ENCODE measurements at regions of chr7 and their contacts with region 1.

Region 1: DNA sequence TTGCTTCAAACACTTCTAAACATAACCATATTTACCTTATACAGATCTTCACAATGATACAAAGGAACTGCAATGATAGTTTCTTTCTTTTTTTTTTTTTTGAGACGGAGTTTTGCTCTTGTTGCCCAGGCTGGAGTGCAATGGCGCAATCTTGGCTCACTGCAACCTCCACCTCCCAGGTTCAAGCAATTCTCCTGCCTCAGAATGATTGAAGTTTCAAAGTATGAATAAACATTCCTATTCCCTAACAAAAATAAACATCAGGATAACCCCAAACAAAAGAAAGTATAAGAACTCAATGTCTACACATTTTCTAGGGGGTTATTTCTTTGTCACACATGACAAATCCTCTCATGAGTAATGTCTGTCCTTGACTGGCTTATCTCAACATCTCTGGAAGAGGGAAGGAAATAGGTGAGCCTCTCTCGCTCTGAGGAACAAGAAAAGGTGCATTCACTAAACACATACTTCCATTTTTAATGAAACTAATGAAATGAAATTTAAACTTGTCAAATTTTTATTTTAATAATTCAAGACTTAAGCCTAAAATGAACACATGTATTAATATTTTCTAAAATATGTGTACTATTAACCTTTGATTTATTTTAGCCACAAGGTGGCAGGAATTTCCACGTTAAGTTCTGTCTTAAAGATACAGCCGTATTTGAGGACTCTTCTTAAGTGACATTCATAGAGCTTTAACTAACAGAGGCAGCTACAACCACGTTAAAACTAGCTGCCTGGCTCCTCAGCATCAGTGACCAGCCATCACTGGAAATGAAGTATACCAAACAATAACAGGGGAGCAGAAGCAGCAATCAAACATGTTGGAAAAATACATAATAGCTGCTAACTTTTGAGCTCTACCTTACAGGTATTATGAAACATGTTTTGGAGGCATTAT is 58.3 kb downstream of the MALSU1 start:
- DNase-seq: peak in 2 of 9 experiments; percentile 26 to 51
- ATAC-seq: peak; percentile 36
- H3K4me3 ChIP-seq: no peak overlapping the region
- H3K4me3 Mint-ChIP-seq: no peak overlapping the region
- H3K27ac ChIP-seq: no peak overlapping the region
- H3K27ac Mint-ChIP-seq: no peak overlapping the region
- H3K4me1 ChIP-seq: peaks cover 4% of the 10 kb centered on the region
- H3K4me1 Mint-ChIP-seq: peaks cover 12% of the 10 kb centered on the region
- H3K27me3 ChIP-seq: peaks cover 0 to 8% of the 10 kb centered on the region in 2 experiments
- H3K27me3 Mint-ChIP-seq: peaks cover 12% of the 10 kb centered on the region
- CTCF ChIP-seq: peak; percentile 50

Region 2: DNA sequence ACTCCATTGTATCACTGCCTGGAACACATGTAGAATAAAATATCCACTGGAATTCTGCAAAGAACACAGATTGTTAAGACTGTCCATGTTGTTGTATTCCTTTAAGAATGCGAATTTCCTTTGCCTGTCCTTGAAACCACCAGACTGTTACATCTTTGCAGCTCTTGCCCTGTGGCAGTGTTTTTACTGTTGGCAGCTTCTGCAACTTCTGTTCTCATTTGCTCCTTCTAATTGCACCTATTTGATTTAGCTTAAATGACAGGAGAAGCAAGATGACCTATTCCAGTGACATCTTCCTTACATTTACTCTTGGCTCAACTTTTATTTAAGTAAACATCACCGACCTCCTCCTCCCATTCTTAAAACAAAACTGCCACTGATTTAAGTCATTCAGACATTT is 18.5 kb before region 1 on chr7:
- CTCF ChIA-PET with region 1: no interaction called
- POLR2A ChIA-PET with region 1: no interaction called
- intact Hi-C with region 1: no loop called
- DNase-seq: no peak
- ATAC-seq: no peak
- H3K4me3 ChIP-seq: no peak overlapping the region
- H3K4me3 Mint-ChIP-seq: no peak overlapping the region
- H3K27ac ChIP-seq: no peak overlapping the region
- H3K27ac Mint-ChIP-seq: no peak overlapping the region
- H3K4me1 ChIP-seq: no peaks in the 10 kb centered on the region
- H3K4me1 Mint-ChIP-seq: no peaks in the 10 kb centered on the region
- H3K27me3 ChIP-seq: no peaks in the 10 kb centered on the region
- H3K27me3 Mint-ChIP-seq: peaks cover 2% of the 10 kb centered on the region
- CTCF ChIP-seq: no peak

Region 3: GRCh38 chr7:23462846-23463245 is 105.4 kb after region 1 on chr7:
- CTCF ChIA-PET with region 1: interaction called, 3 read pairs
- POLR2A ChIA-PET with region 1: no interaction called
- intact Hi-C with region 1: loop called (anchors 5 kb)
- DNase-seq: peak in 2 of 9 experiments; percentile 18 to 40
- ATAC-seq: no peak
- H3K4me3 ChIP-seq: no peak overlapping the region
- H3K4me3 Mint-ChIP-seq: no peak overlapping the region
- H3K27ac ChIP-seq: no peak overlapping the region
- H3K27ac Mint-ChIP-seq: no peak overlapping the region
- H3K4me1 ChIP-seq: peaks cover 3% of the 10 kb centered on the region
- H3K4me1 Mint-ChIP-seq: peaks cover 7% of the 10 kb centered on the region
- H3K27me3 ChIP-seq: peaks cover 18 to 36% of the 10 kb centered on the region in 2 experiments
- H3K27me3 Mint-ChIP-seq: peaks cover 69% of the 10 kb centered on the region
- CTCF ChIP-seq: no peak

Region 4: DNA sequence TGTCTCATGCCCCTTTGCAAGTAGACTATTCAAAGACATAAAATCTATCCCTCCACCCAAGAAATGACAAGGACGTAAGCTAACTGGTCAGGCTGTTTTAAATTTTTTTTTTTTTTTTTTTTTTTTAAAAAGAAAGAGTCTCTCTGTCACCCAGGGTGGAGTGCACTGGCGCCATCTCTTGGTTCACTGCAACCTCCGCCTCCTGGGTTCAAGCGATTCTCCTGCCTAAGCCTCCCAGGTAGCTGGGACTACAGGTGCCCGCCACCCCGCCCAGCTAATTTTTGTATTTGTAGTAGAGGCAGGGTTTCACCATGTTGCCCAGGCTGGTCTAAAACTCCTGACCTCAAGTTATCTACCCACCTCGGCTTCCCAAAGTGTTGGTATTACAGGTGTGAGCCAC is 163.1 kb after region 1 on chr7:
- CTCF ChIA-PET with region 1: interaction called, 5 read pairs
- POLR2A ChIA-PET with region 1: no interaction called
- intact Hi-C with region 1: loop called in 1 of 2 experiments (anchors 10 kb)
- DNase-seq: peak in 1 of 9 experiments; percentile 37
- ATAC-seq: no peak
- H3K4me3 ChIP-seq: no peak overlapping the region
- H3K4me3 Mint-ChIP-seq: no peak overlapping the region
- H3K27ac ChIP-seq: no peak overlapping the region
- H3K27ac Mint-ChIP-seq: no peak overlapping the region
- H3K4me1 ChIP-seq: peaks cover 23% of the 10 kb centered on the region
- H3K4me1 Mint-ChIP-seq: peaks cover 49% of the 10 kb centered on the region
- H3K27me3 ChIP-seq: no peaks in the 10 kb centered on the region
- H3K27me3 Mint-ChIP-seq: no peaks in the 10 kb centered on the region
- CTCF ChIP-seq: no peak